Right ventricle myocardium superior (tissue), 1 donor: ENCODE measurements at regions of chr6 and their contacts with region 1.

Region 1: DNA sequence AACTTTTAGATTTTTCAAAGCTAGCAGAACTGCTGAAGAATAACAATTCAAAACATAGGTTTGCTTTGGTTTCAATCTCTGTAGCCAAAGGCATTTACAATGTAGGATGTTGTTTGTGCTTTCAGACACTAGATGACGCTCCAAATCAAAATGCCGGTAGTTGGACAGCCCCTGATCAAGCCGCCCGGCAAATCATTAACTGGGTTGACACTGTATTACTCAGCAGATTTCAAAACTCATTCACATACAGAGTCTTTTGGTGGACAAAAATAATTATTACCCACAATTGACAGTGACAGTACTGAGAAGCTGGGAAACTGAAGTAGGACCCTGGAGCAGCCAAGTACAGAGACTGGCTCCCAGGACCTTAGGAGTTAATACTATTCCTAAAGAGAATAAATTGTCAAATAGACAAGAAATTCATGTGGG is 21.3 kb upstream of the HFE start:
- DNase-seq: no peak
- ATAC-seq: peak; percentile 94

Region 2: GRCh38 chr6:25623879-25624278 is 442.1 kb before region 1 on chr6:
- intact Hi-C with region 1: no loop called
- DNase-seq: no peak
- ATAC-seq: no peak

Region 3: DNA sequence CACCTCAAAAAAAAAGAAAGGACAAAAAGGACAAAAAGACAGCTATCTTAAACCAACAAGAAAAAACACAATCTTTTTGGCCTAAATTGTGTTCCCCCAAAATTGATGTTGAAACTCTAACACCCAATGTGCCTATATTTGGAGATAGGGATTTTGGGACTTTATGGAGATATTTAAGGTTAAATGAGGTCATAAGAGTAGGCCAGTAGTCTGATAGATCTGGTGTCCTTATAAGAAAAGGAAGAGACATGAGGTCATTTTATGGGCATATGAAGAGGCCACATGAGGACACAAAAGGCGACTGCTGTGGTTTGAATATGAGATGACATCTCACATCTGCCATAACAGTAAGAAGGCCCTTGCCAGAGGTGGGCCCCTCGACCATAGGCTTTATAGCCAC is 53.9 kb before region 1 on chr6:
- intact Hi-C with region 1: no loop called
- DNase-seq: no peak
- ATAC-seq: no peak

Region 4: GRCh38 chr6:26097268-26097875 is 31.4 kb after region 1 on chr6:
- intact Hi-C with region 1: loop called (anchors 2 kb)
- DNase-seq: no peak
- ATAC-seq: peak; percentile 90